Activated CD4-positive, alpha-beta T cell treated with anti-CD3 and anti-CD28 coated beads for 36 hours (primary cell): ENCODE measurements at regions of chr3 and their contacts with region 1.

Region 1: DNA sequence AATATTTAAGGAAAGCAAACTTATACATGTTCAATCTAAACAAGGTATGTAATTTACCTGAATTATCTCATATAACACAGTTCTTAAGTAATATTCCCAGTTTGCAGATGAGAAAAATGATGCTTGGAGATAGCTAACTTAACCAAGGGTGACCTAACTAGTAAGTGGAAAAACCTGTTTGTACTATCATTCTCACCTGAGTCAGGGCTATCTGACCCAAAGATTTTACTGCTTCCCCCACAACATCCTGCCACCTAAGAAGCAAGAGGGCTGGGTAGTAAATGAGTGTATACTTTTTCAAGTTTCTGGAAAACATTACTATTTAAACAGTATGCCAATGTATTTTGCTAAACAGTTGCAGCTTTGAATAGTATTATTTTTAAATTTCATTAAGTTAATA is 10.6 kb downstream of the TP63 start:
- DNase-seq: no peak
- ATAC-seq: peak; percentile 47
- H3K4me3 Mint-ChIP-seq: no peak overlapping the region
- H3K27ac Mint-ChIP-seq: no peak overlapping the region
- H3K4me1 Mint-ChIP-seq: no peaks in the 10 kb centered on the region
- H3K27me3 Mint-ChIP-seq: no peaks in the 10 kb centered on the region

Region 2: GRCh38 chr3:189652042-189652441 is 10.3 kb after region 1 on chr3:
- CTCF ChIA-PET with region 1: interaction called, 10 read pairs
- POLR2A ChIA-PET with region 1: no interaction called
- intact Hi-C with region 1: no loop called
- DNase-seq: peak; percentile 46
- ATAC-seq: no peak
- H3K4me3 Mint-ChIP-seq: no peak overlapping the region
- H3K27ac Mint-ChIP-seq: no peak overlapping the region
- H3K4me1 Mint-ChIP-seq: no peaks in the 10 kb centered on the region
- H3K27me3 Mint-ChIP-seq: peaks cover 1% of the 10 kb centered on the region

Region 3: DNA sequence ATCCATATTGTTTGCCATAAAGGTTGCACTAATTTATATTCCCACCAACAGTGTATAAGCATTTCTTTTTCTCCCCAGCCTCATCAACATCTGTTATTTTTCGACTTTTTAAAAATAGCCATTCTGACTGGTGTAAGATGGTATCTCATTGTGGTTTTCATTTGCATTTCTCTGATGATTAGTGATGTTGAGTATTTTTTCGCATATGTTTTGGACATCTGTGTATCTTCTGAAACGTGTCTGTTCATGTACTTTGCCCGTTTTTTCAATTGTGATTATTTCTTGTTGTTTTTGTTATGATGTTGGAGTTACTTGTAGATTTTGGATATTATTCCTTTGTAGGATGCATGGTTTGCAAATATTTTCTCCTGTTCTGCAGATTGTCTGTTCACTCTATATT is 35.9 kb after region 1 on chr3:
- CTCF ChIA-PET with region 1: no interaction called
- POLR2A ChIA-PET with region 1: no interaction called
- intact Hi-C with region 1: no loop called
- DNase-seq: no peak
- ATAC-seq: no peak
- H3K4me3 Mint-ChIP-seq: no peak overlapping the region
- H3K27ac Mint-ChIP-seq: no peak overlapping the region
- H3K4me1 Mint-ChIP-seq: no peaks in the 10 kb centered on the region
- H3K27me3 Mint-ChIP-seq: no peaks in the 10 kb centered on the region